SK-N-SH (cell line): ENCODE measurements at regions of chr22 and their contacts with region 1.

Region 1: GRCh38 chr22:20418211-20418788 is 19.3 kb downstream of the SCARF2 start:
- DNase-seq: peak; percentile 88
- H3K4me3 ChIP-seq: peak overlapping the region; percentile 36 to 67
- H3K27ac ChIP-seq: peak overlapping the region; percentile 33 to 34; a peak in 2 of 4 replicates
- H3K4me1 ChIP-seq: peaks cover 12 to 27% of the 10 kb centered on the region in 2 experiments; a peak in 3 of 4 replicates
- H3K27me3 ChIP-seq: no peaks in the 10 kb centered on the region
- CTCF ChIP-seq: peak; percentile 87
- EP300 ChIP-seq: no peak
- RAD21 ChIP-seq: peak; percentile 95

Region 2: GRCh38 chr22:20237480-20238440 is 180.5 kb before region 1 on chr22:
- CTCF ChIA-PET with region 1: no interaction called
- POLR2A ChIA-PET with region 1: no interaction called
- DNase-seq: no peak
- H3K4me3 ChIP-seq: no peak overlapping the region
- H3K27ac ChIP-seq: peak overlapping the region in 1 of 2 experiments; percentile 55; a peak in 1 of 4 replicates
- H3K4me1 ChIP-seq: peaks cover 0 to 23% of the 10 kb centered on the region in 2 experiments; a peak in 1 of 4 replicates
- H3K27me3 ChIP-seq: no peaks in the 10 kb centered on the region
- CTCF ChIP-seq: no peak
- EP300 ChIP-seq: no peak
- RAD21 ChIP-seq: no peak

Region 3: GRCh38 chr22:20383538-20383937 is 34.8 kb before region 1 on chr22:
- CTCF ChIA-PET with region 1: no interaction called
- POLR2A ChIA-PET with region 1: no interaction called
- DNase-seq: no peak
- H3K4me3 ChIP-seq: no peak overlapping the region
- H3K27ac ChIP-seq: no peak overlapping the region
- H3K4me1 ChIP-seq: no peaks in the 10 kb centered on the region
- H3K27me3 ChIP-seq: peaks cover 11% of the 10 kb centered on the region; the same call in 1 of the 2 replicates
- CTCF ChIP-seq: no peak
- EP300 ChIP-seq: no peak
- RAD21 ChIP-seq: no peak

Region 4: DNA sequence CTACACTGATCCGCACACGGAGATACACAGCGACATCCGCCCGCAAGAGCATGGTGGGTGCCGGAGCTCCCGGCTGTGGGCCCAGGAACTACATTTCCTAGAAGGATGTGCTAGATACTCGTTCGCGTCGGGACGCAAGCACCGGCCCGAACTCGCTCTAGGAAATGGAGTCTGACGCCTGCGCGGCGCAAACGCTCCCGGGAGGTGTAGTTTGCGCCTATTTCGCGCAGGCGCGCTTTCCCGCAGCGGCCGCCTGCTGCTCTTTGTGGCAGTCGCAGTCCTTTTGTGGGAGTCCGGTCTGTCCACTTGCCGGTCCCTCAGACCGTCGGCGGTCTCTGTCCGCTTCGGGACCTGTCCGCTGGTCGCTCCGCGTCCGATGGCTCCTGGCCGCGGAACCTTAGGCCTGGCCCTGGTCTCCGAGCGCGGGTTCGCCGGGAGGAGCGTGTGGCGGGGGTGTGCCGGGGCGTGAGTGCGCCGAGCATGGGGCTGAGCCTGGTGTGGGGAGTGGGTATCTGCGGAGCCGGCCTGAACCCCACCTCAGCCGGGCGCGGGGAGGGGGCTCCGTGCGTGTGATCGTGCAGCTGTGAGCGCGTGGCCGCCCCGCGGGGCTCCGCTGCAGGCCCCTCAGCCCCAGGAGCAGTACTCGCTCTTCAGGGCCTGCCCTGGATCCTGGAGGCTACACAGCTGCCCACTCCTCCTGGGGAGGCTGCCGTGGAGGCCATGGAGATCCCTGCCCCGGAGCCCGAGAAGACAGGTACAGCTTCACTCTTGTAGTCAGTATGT is 24.2 kb before region 1 on chr22 and contains the start of gene ZNF74:
- CTCF ChIA-PET with region 1: interaction called, 12 read pairs
- POLR2A ChIA-PET with region 1: no interaction called
- DNase-seq: peak; percentile 92
- H3K4me3 ChIP-seq: peak within 1 kb of the TSS; percentile 78 to 82
- H3K27ac ChIP-seq: peak within 1 kb of the TSS; percentile 42 to 90; a peak in 3 of 4 replicates
- H3K4me1 ChIP-seq: peaks cover 7 to 18% of the 10 kb centered on the region in 2 experiments; a peak in 3 of 4 replicates
- H3K27me3 ChIP-seq: no peaks in the 10 kb centered on the region
- CTCF ChIP-seq: no peak
- EP300 ChIP-seq: no peak
- RAD21 ChIP-seq: no peak
- polyA plus RNA-seq, gene ZNF74: 8.0 and 9.9 TPM in 2 replicates

Region 5: GRCh38 chr22:20405931-20406685 is 12.2 kb before region 1 on chr22:
- CTCF ChIA-PET with region 1: interaction called, 18 read pairs
- POLR2A ChIA-PET with region 1: interaction called, 3 read pairs
- DNase-seq: no peak
- H3K4me3 ChIP-seq: no peak overlapping the region
- H3K27ac ChIP-seq: no peak overlapping the region
- H3K4me1 ChIP-seq: no peaks in the 10 kb centered on the region
- H3K27me3 ChIP-seq: no peaks in the 10 kb centered on the region
- CTCF ChIP-seq: no peak
- EP300 ChIP-seq: no peak
- RAD21 ChIP-seq: no peak

Region 6: GRCh38 chr22:20430720-20431510 is 12.6 kb after region 1 on chr22:
- CTCF ChIA-PET with region 1: interaction called, 38 read pairs
- POLR2A ChIA-PET with region 1: interaction called, 9 read pairs
- DNase-seq: peak; percentile 57
- H3K4me3 ChIP-seq: no peak overlapping the region
- H3K27ac ChIP-seq: no peak overlapping the region
- H3K4me1 ChIP-seq: peaks cover 12 to 15% of the 10 kb centered on the region in 2 experiments; a peak in 3 of 4 replicates
- H3K27me3 ChIP-seq: no peaks in the 10 kb centered on the region
- CTCF ChIP-seq: no peak
- EP300 ChIP-seq: no peak
- RAD21 ChIP-seq: no peak

Region 7: DNA sequence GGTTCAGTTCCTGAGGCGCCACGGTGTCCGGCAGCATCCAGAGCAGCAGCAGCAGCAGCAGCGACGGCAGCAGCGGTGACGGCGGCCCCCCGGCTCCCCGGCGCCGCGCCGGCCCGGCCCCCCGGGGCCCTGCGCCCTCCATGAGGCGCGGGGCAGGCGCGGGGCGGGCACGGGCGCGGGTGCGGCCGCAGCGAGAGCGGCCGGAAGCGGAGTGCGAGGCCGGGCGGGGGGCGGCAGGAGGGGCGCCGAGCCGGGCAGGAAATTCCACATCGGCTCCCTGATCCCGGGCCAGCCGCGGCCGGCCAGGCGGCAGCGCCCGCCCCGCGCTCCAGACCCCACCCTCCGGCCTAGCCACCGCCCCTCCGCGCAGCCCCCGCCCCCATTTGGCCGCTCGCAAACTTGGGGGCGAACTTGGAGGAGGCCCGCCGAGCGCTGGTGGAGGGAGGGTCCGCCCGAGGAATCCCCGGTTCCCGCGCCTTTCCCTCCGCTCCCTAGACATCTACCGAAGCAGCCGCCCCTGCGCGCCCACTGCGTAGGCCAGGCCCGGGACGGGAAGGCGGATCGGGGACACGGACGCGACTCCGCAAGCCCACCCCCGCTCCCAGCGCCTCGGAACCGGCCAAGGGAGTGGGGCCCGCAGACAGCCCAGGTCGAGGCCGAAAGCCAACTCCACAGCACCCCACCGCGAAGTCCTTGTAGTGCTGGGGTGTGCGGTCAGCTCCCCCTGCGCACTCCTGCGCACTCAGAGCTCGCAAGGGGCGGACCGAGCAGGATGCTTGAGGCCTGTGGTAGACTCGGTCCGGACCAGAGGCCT is 19.5 kb after region 1 on chr22 and contains the start of gene SCARF2:
- CTCF ChIA-PET with region 1: interaction called, 38 read pairs
- POLR2A ChIA-PET with region 1: interaction called, 13 read pairs
- DNase-seq: peak; percentile 98
- H3K4me3 ChIP-seq: peak within 1 kb of the TSS; percentile 94 to 96
- H3K27ac ChIP-seq: peak within 1 kb of the TSS; percentile 76 to 86
- H3K4me1 ChIP-seq: peaks cover 19 to 28% of the 10 kb centered on the region in 2 experiments; a peak in 3 of 4 replicates
- H3K27me3 ChIP-seq: no peaks in the 10 kb centered on the region
- CTCF ChIP-seq: no peak
- EP300 ChIP-seq: no peak
- RAD21 ChIP-seq: no peak
- polyA plus RNA-seq, gene SCARF2: 32.1 and 49.0 TPM in 2 replicates

Region 8: GRCh38 chr22:20456064-20456721 is 37.9 kb after region 1 on chr22:
- CTCF ChIA-PET with region 1: interaction called, 102 read pairs
- POLR2A ChIA-PET with region 1: interaction called, 6 read pairs
- DNase-seq: peak; percentile 91
- H3K4me3 ChIP-seq: no peak overlapping the region; a peak in 1 of 4 replicates
- H3K27ac ChIP-seq: peak overlapping the region in 1 of 2 experiments; percentile 50; a peak in 1 of 4 replicates
- H3K4me1 ChIP-seq: peaks cover 0 to 7% of the 10 kb centered on the region in 2 experiments; a peak in 1 of 4 replicates
- H3K27me3 ChIP-seq: no peaks in the 10 kb centered on the region
- CTCF ChIP-seq: peak; percentile 89
- EP300 ChIP-seq: no peak
- RAD21 ChIP-seq: peak; percentile 98

Region 9: GRCh38 chr22:20495861-20496681 is 77.8 kb after region 1 on chr22:
- CTCF ChIA-PET with region 1: interaction called, 14 read pairs
- POLR2A ChIA-PET with region 1: no interaction called
- DNase-seq: peak; percentile 99
- H3K4me3 ChIP-seq: peak overlapping the region; percentile 64 to 76
- H3K27ac ChIP-seq: peak overlapping the region; percentile 94 to 95
- H3K4me1 ChIP-seq: peaks cover 5 to 11% of the 10 kb centered on the region in 2 experiments; a peak in 1 of 4 replicates
- H3K27me3 ChIP-seq: no peaks in the 10 kb centered on the region
- CTCF ChIP-seq: peak; percentile 92
- EP300 ChIP-seq: no peak
- RAD21 ChIP-seq: peak; percentile 67